ENCODE measurements at regions of chr1 and their contacts with region 1.

Region 1: GRCh38 chr1:101257500-101258325 is 20.9 kb downstream of the S1PR1 start:
- DNase-seq: peak in 5 of 14 experiments; percentile 24 to 81 (median 64)
- ATAC-seq: peak; percentile 72
- H3K4me3 ChIP-seq: no peak overlapping the region
- H3K4me3 Mint-ChIP-seq: peak overlapping the region; percentile 56
- H3K27ac ChIP-seq: peak overlapping the region; percentile 47 to 54
- H3K27ac Mint-ChIP-seq: peak overlapping the region; percentile 47
- H3K4me1 ChIP-seq: peaks cover 46% of the 10 kb centered on the region
- H3K4me1 Mint-ChIP-seq: peaks cover 65% of the 10 kb centered on the region
- H3K27me3 ChIP-seq: no peaks in the 10 kb centered on the region
- H3K27me3 Mint-ChIP-seq: no peaks in the 10 kb centered on the region
- CTCF ChIP-seq: no peak

Region 2: DNA sequence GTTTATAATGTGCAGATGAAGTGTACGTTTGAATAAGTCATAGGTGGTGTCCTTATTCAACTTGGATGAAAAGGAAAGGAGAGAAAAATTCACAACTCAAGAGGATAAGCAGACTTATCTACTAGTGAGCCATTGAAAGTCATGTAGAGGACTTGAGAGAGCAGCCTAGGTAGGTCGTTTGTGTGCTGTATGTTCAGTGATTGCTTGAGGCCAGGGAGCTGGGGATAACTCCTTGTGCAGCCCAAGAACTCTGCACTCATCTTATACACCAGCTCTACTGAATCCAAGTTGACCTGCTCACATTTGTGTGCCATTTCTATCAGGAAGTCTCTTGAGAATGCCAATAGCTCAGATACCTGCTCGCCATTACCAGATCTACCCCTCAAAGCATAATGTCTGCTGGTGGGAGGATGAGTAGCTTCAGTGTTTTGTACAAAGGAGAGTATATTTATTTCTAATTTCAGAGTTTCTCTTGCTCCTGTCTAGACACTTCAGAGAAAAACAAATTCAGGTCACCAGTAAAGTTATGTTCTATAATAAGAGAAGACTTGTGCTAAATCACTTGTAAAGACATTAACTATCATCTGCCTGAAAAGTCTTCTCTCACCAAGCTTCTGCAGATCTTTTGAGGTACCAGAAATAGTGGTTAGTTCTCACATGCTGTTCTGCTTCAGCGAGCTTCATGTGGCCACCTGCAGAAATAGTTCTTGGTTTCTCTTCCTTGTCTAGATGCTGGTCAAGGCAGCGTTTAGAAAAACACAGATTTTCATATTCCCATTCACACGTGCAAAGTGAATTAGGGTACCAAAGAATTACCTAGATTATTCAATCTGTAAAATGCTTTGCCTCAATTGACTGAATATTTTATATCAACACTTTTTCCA is 10.1 kb before region 1 on chr1:
- CTCF ChIA-PET with region 1: interaction called, 7 read pairs
- POLR2A ChIA-PET with region 1: interaction called, 23 read pairs
- intact Hi-C with region 1: loop called in 1 of 2 experiments (anchors 2 kb)
- DNase-seq: no peak
- ATAC-seq: no peak
- H3K4me3 ChIP-seq: no peak overlapping the region
- H3K4me3 Mint-ChIP-seq: peak overlapping the region; percentile 8
- H3K27ac ChIP-seq: no peak overlapping the region
- H3K27ac Mint-ChIP-seq: peak overlapping the region; percentile 40
- H3K4me1 ChIP-seq: peaks cover 44% of the 10 kb centered on the region
- H3K4me1 Mint-ChIP-seq: peaks cover 79% of the 10 kb centered on the region
- H3K27me3 ChIP-seq: no peaks in the 10 kb centered on the region
- H3K27me3 Mint-ChIP-seq: no peaks in the 10 kb centered on the region
- CTCF ChIP-seq: no peak

Region 3: DNA sequence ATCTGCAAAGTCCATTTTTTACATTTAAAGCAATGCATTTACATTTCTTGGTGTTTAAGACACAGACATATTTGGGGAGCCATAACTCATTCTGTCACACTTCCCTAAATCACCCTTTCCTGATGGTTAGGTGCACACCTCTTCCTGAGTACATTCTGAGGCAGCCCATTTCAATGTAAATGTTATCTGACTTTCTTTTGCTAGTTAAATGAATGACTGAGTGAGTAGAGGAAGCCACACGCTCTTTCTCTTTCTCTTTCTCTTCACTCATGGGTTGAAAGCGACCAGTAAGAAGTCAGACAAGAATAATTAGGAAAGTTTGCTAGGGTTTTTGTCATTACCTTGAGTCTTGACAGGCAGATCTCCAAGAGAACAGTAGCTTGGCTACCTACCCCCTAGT is 122.2 kb after region 1 on chr1:
- CTCF ChIA-PET with region 1: no interaction called
- POLR2A ChIA-PET with region 1: no interaction called
- intact Hi-C with region 1: no loop called
- DNase-seq: no peak
- ATAC-seq: no peak
- H3K4me3 ChIP-seq: no peak overlapping the region
- H3K4me3 Mint-ChIP-seq: no peak overlapping the region
- H3K27ac ChIP-seq: no peak overlapping the region
- H3K27ac Mint-ChIP-seq: no peak overlapping the region
- H3K4me1 ChIP-seq: no peaks in the 10 kb centered on the region
- H3K4me1 Mint-ChIP-seq: no peaks in the 10 kb centered on the region
- H3K27me3 ChIP-seq: no peaks in the 10 kb centered on the region
- H3K27me3 Mint-ChIP-seq: no peaks in the 10 kb centered on the region
- CTCF ChIP-seq: no peak

Measured in CD4-positive, alpha-beta T cell (primary cell).